Naive thymus-derived CD4-positive, alpha-beta T cell (primary cell): ENCODE measurements at regions of chr5 and their contacts with region 1.

Region 1: GRCh38 chr5:100903039-100903887 is at the start of gene ST8SIA4:
- DNase-seq: peak; percentile 70 to 95 (median 87)
- ATAC-seq: peak; percentile 82
- H3K4me3 ChIP-seq: peak within 1 kb of the TSS; percentile 83
- H3K4me3 Mint-ChIP-seq: peak within 1 kb of the TSS; percentile 88 to 99 (median 96)
- H3K27ac ChIP-seq: peak within 1 kb of the TSS; percentile 89
- H3K27ac Mint-ChIP-seq: peak within 1 kb of the TSS; percentile 86 to 98 (median 94)
- H3K4me1 ChIP-seq: peaks cover 22 to 23% of the 10 kb centered on the region in 2 donors
- H3K4me1 Mint-ChIP-seq: peaks cover 32 to 51% (median 46%) of the 10 kb centered on the region in 7 donors
- H3K27me3 ChIP-seq: no peaks in the 10 kb centered on the region
- H3K27me3 Mint-ChIP-seq: no peaks in the 10 kb centered on the region
- total RNA-seq, gene ST8SIA4: 17.5 to 54.5 (median 23.4) TPM

Region 2: GRCh38 chr5:100535060-100536005 is 367.9 kb before region 1 on chr5 and contains the start of gene FAM174A:
- CTCF ChIA-PET with region 1: no interaction called
- POLR2A ChIA-PET with region 1: interaction called, 10 read pairs
- intact Hi-C with region 1: loop called (anchors 1 kb)
- DNase-seq: peak; percentile 88 to 96 (median 95)
- ATAC-seq: peak; percentile 91
- H3K4me3 ChIP-seq: peak within 1 kb of the TSS; percentile 88
- H3K4me3 Mint-ChIP-seq: peak within 1 kb of the TSS; percentile 84 to 100 (median 96)
- H3K27ac ChIP-seq: peak within 1 kb of the TSS; percentile 82
- H3K27ac Mint-ChIP-seq: peak within 1 kb of the TSS; percentile 81 to 100 (median 97)
- H3K4me1 ChIP-seq: peaks cover 10 to 11% of the 10 kb centered on the region in 2 donors
- H3K4me1 Mint-ChIP-seq: peaks cover 15 to 51% (median 33%) of the 10 kb centered on the region in 7 donors
- H3K27me3 ChIP-seq: no peaks in the 10 kb centered on the region
- H3K27me3 Mint-ChIP-seq: peaks cover 0 to 15% (median 0%) of the 10 kb centered on the region in 5 donors
- total RNA-seq, gene FAM174A: 4.6 to 10.7 (median 6.0) TPM

Region 3: GRCh38 chr5:100731768-100732167 is 171.5 kb before region 1 on chr5:
- CTCF ChIA-PET with region 1: no interaction called
- POLR2A ChIA-PET with region 1: interaction called, 7 read pairs
- intact Hi-C with region 1: loop called (anchors 1 to 2 kb)
- DNase-seq: peak in 7 of 9 donors; percentile 14 to 55 (median 45)
- ATAC-seq: peak; percentile 87
- H3K4me3 ChIP-seq: peak overlapping the region; percentile 7
- H3K4me3 Mint-ChIP-seq: peak overlapping the region in 9 of 10 donors; percentile 1 to 85 (median 80)
- H3K27ac ChIP-seq: no peak overlapping the region
- H3K27ac Mint-ChIP-seq: peak overlapping the region; percentile 28 to 83 (median 65)
- H3K4me1 ChIP-seq: peaks cover 0 to 11% of the 10 kb centered on the region in 2 donors
- H3K4me1 Mint-ChIP-seq: peaks cover 4 to 14% (median 9%) of the 10 kb centered on the region in 7 donors
- H3K27me3 ChIP-seq: no peaks in the 10 kb centered on the region
- H3K27me3 Mint-ChIP-seq: no peaks in the 10 kb centered on the region

Region 4: DNA sequence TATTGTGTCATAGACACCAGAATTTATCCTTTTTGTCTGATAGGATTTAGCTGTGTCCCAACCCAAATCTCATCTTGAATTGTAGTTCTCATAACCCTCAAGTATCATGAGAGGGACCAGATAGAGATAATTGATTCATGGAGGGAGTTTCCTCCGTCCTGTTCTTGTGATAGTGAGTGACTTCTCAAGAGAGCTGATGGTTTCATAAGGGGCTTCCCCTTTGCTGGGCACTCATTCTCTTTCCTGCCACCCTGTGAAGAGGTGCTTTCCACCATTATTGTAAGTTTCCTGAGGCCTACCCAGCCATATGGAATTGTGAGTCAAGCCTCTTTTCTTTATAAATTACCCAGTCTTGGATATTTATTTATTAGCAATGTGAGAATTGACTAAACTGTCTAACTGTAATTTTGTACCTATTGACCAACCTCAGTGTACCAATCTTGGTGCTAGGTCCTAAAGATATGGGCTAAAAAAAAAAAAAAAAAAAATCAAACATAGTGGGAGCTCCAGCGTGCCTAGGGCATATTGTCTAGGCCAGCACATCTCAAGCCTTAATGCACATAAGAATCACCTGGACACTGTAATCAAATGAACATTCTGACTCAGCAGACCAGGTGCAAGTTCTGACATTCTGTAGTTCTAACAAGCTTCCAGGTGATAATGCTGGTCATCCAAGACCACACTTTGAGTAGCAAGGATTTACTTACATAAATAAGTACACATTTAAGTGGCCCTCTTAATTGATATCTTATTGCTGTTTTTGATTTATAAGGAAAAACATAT is 30.7 kb before region 1 on chr5:
- CTCF ChIA-PET with region 1: no interaction called
- POLR2A ChIA-PET with region 1: interaction called, 4 read pairs
- intact Hi-C with region 1: loop called in 1 of 2 experiments (anchors 2 kb)
- DNase-seq: no peak
- ATAC-seq: peak; percentile 40
- H3K4me3 ChIP-seq: no peak overlapping the region
- H3K4me3 Mint-ChIP-seq: no peak overlapping the region
- H3K27ac ChIP-seq: no peak overlapping the region
- H3K27ac Mint-ChIP-seq: peak overlapping the region in 7 of 9 donors; percentile 0 to 64 (median 36)
- H3K4me1 ChIP-seq: peaks cover 0 to 8% of the 10 kb centered on the region in 2 donors
- H3K4me1 Mint-ChIP-seq: peaks cover 15 to 53% (median 40%) of the 10 kb centered on the region in 7 donors
- H3K27me3 ChIP-seq: no peaks in the 10 kb centered on the region
- H3K27me3 Mint-ChIP-seq: no peaks in the 10 kb centered on the region

Region 5: GRCh38 chr5:101009758-101010519 is 106.7 kb after region 1 on chr5:
- CTCF ChIA-PET with region 1: no interaction called
- POLR2A ChIA-PET with region 1: no interaction called
- intact Hi-C with region 1: loop called in 1 of 2 experiments (anchors 2 kb)
- DNase-seq: no peak
- ATAC-seq: no peak
- H3K4me3 ChIP-seq: no peak overlapping the region
- H3K4me3 Mint-ChIP-seq: no peak overlapping the region
- H3K27ac ChIP-seq: no peak overlapping the region
- H3K27ac Mint-ChIP-seq: no peak overlapping the region
- H3K4me1 ChIP-seq: no peaks in the 10 kb centered on the region
- H3K4me1 Mint-ChIP-seq: no peaks in the 10 kb centered on the region
- H3K27me3 ChIP-seq: no peaks in the 10 kb centered on the region
- H3K27me3 Mint-ChIP-seq: no peaks in the 10 kb centered on the region